GM23248 (cell line): ENCODE measurements at regions of chr21 and their contacts with region 1.

Region 1: GRCh38 chr21:31866077-31866511 is 6.7 kb upstream of the HUNK start:
- DNase-seq: peak; percentile 88
- H3K4me3 ChIP-seq: no peak overlapping the region
- H3K27ac ChIP-seq: no peak overlapping the region
- H3K4me1 ChIP-seq: no peaks in the 10 kb centered on the region
- H3K27me3 ChIP-seq: peaks cover 12% of the 10 kb centered on the region

Region 2: GRCh38 chr21:32253215-32253641 is 387.1 kb after region 1 on chr21:
- in situ Hi-C with region 1: loop called (anchors 5 kb)
- DNase-seq: peak; percentile 50
- H3K4me3 ChIP-seq: no peak overlapping the region
- H3K27ac ChIP-seq: no peak overlapping the region
- H3K4me1 ChIP-seq: peaks cover 28% of the 10 kb centered on the region
- H3K27me3 ChIP-seq: no peaks in the 10 kb centered on the region